GM23248 (cell line): ENCODE measurements at regions of chr1 and their contacts with region 1.

Region 1: DNA sequence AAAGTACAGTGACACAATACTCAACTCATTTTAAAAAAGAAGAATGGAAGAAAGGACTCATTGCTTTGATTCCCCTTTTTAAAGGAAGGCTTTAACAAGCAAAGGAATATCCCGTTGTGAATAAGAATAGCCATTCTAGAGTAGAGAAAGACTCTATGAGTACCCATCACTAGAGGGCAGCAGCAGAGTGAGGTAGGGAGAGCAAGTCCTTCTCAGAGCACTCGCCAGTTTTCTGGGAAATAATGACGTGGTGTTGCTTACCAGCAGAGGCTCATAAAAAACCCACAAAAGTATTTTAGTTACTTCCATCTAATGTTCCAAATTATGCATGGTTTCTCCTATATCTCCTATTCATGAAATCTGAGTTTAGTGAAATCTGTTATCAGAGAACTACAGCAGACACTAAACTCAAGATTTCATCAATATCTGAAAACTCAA is 74.6 kb downstream of the USP24 start:
- DNase-seq: peak; percentile 96
- H3K4me3 ChIP-seq: no peak overlapping the region
- H3K27ac ChIP-seq: peak overlapping the region; percentile 30
- H3K4me1 ChIP-seq: 0 out of 2 replicates have a peak, but pooled peaks cover 13% of the 10 kb centered on the region
- H3K27me3 ChIP-seq: no peaks in the 10 kb centered on the region

Region 2: DNA sequence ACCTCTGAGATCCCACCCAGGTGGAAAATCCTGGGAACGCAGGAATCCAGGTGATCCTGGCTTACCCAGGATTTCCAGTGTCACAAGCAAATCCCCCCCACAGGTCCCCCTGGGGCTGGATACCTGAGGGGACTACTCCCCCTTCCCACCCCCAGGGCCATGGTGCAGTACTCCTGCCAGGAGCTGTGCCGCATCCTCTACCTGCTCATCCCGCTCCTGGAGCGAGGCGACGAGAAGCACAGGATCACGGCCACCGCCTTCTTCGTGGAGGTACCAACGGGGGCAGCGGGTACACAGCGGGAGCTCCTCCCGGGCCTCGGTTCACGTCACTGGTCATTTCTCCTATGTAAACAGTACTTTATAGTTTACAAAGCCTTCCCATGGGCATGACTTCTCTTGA is 445.3 kb before region 1 on chr1:
- in situ Hi-C with region 1: no loop called
- DNase-seq: no peak
- H3K4me3 ChIP-seq: no peak overlapping the region
- H3K27ac ChIP-seq: no peak overlapping the region
- H3K4me1 ChIP-seq: no peaks in the 10 kb centered on the region
- H3K27me3 ChIP-seq: no peaks in the 10 kb centered on the region

Region 3: DNA sequence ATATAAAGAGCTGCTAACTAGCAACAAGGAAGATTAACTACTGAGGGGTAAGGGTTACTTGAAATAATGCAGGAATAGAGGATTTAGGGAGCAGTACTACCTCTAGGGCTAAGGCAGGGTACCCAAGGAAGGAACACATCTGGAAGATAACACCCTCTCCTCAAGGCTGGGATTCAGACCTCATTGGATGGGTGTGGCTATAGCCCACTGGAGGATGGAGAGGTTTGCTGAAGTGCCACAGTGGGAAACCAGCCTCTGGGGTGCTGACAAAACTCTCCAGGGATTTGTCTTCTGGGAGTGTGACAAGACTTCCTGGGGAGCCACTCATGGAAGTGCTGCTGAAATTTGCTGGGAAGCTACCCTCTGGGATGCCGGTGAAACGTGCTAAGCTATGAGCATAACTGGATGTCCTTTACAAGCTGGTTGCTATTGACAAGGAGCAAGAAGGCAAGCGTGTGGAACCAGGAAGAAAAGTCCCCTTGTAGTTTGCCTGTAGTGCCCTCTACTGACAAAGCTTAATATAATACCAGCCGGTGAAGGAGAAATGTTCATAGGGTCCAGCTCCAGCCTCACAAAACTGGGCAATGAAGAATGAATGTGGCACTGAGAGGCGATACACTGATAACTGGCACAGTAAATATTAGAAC is 197.4 kb after region 1 on chr1:
- in situ Hi-C with region 1: no loop called
- DNase-seq: peak; percentile 74
- H3K4me3 ChIP-seq: no peak overlapping the region
- H3K27ac ChIP-seq: no peak overlapping the region
- H3K4me1 ChIP-seq: no peaks in the 10 kb centered on the region
- H3K27me3 ChIP-seq: no peaks in the 10 kb centered on the region

Region 4: DNA sequence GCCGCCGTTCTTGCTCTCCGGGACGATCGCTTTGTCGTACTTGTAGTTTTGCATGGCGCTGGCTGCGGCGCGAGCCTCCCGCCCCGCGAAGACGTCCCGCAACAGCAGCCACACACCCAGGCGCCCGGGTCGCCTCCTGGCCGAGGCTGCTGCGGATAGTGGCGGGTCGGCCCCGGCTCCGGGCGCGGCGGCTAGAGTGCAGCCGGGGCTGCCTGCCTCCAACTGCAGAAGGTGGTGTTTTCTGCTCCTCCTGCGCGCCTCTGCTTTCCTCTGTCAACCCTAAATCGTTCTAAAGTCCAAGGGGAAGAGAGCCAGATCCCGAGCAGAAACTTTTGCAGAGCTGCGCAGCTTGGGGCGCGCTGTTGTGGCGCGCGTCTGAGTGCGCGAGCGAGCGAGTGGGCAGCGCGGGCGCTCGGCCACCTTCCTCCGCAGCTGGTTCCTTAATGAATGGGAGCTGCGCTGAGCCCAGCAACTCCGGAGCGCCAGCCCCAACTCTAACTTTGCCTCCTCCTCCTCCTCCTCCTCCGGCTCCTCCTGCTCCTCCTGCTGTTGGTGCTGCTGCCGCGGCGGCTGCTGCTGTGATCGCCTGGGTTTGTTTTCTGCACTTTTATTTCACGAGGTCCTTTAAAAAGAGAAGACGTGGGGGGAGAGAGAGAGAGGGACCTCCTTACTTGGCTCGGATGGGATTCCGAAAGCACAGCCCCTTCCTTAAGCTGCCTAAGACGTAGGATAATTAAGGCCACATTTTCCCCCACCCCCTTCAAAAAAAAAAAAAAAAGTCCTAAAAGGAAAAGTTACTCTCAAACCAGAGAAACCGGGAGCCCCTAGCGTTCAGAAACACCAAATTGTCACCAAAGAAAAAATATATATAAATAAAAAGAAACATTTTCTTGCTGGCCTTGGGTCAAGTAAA is 1438.7 kb after region 1 on chr1 and contains the start of gene PLPP3:
- in situ Hi-C with region 1: loop called (anchors 25 kb)
- DNase-seq: peak; percentile 95
- H3K4me3 ChIP-seq: peak within 1 kb of the TSS; percentile 89
- H3K27ac ChIP-seq: peak within 1 kb of the TSS; percentile 75
- H3K4me1 ChIP-seq: peaks cover 19% of the 10 kb centered on the region
- H3K27me3 ChIP-seq: no peaks in the 10 kb centered on the region
- total RNA-seq, gene PLPP3: 156 and 159 TPM in 2 replicates